PC-9 (cell line): ENCODE measurements at regions of chr4 and their contacts with region 1.

Region 1: DNA sequence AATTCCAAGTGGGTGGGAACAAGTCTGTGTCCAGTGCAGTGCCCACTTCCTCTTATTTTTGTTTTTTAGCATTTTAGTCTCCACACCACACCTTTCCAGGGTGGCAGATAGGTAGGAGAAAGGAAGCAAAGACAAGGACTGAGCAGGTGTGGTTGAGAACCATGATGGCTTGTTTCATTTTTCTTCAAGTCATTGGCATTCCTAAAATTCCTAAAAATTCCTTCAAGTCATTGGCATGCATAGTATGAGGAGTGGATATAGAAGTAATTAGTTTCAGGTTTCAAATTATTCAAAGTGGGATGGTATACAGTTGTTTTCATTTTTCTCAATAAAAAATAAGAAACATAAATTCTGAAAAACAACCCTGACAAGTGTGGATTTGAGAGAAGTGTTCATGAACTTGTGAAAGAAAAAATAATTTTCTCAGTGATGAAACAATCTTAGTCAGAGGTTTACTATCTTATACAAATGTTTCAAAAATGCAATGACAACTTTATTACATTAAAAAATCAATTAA is 22.3 kb upstream of the HERC3 start:
- DNase-seq: no peak
- H3K4me3 ChIP-seq: no peak overlapping the region
- H3K27ac ChIP-seq: no peak overlapping the region
- H3K4me1 ChIP-seq: no peaks in the 10 kb centered on the region
- H3K27me3 ChIP-seq: no peaks in the 10 kb centered on the region
- CTCF ChIP-seq: no peak

Region 2: GRCh38 chr4:87165892-87166291 is 1404.1 kb before region 1 on chr4:
- CTCF ChIA-PET with region 1: interaction called, 18 read pairs
- POLR2A ChIA-PET with region 1: no interaction called
- intact Hi-C with region 1: no loop called
- DNase-seq: no peak
- H3K4me3 ChIP-seq: no peak overlapping the region
- H3K27ac ChIP-seq: no peak overlapping the region
- H3K4me1 ChIP-seq: no peaks in the 10 kb centered on the region
- H3K27me3 ChIP-seq: no peaks in the 10 kb centered on the region
- CTCF ChIP-seq: no peak

Region 3: DNA sequence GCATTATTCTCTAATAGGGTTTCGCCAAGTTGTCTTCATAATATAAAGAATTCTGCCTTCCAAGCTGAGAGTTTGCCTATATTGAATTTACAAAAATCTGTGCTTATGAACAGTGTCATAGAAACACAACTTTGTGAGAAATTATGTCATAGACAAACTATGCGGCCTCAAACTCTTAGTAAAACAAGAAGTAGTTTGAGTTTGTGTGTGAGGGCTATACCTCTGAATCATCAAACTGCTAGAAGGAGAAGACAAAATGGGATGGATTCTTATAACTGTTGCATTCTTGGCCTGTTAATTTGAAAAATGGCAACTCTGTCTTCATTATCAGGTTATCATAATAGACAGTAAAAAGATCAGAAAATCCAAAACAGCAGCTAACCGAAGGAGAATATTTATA is 173.7 kb after region 1 on chr4:
- CTCF ChIA-PET with region 1: no interaction called
- POLR2A ChIA-PET with region 1: no interaction called
- intact Hi-C with region 1: no loop called
- DNase-seq: no peak
- H3K4me3 ChIP-seq: no peak overlapping the region
- H3K27ac ChIP-seq: no peak overlapping the region
- H3K4me1 ChIP-seq: no peaks in the 10 kb centered on the region
- H3K27me3 ChIP-seq: no peaks in the 10 kb centered on the region
- CTCF ChIP-seq: no peak